ENCODE measurements at regions of chr13 and their contacts with region 1.

Region 1: GRCh38 chr13:94569615-94570014 is 26.3 kb downstream of the TGDS start:
- DNase-seq: no peak
- ATAC-seq: no peak
- H3K4me3 ChIP-seq: no peak overlapping the region
- H3K27ac ChIP-seq: no peak overlapping the region
- H3K4me1 ChIP-seq: no peaks in the 10 kb centered on the region
- H3K27me3 ChIP-seq: no peaks in the 10 kb centered on the region
- CTCF ChIP-seq: no peak

Region 2: GRCh38 chr13:94362411-94362909 is 207.2 kb before region 1 on chr13:
- CTCF ChIA-PET with region 1: no interaction called
- POLR2A ChIA-PET with region 1: no interaction called
- in situ Hi-C with region 1: no loop called
- intact Hi-C with region 1: no loop called
- DNase-seq: peak; percentile 53
- ATAC-seq: peak; percentile 93
- H3K4me3 ChIP-seq: no peak overlapping the region
- H3K27ac ChIP-seq: no peak overlapping the region
- H3K4me1 ChIP-seq: no peaks in the 10 kb centered on the region
- H3K27me3 ChIP-seq: no peaks in the 10 kb centered on the region
- CTCF ChIP-seq: peak; percentile 75

Region 3: GRCh38 chr13:94617389-94618000 is 47.9 kb after region 1 on chr13:
- CTCF ChIA-PET with region 1: no interaction called
- POLR2A ChIA-PET with region 1: interaction called, 11 read pairs
- in situ Hi-C with region 1: no loop called
- intact Hi-C with region 1: no loop called
- DNase-seq: no peak
- ATAC-seq: no peak
- H3K4me3 ChIP-seq: no peak overlapping the region
- H3K27ac ChIP-seq: no peak overlapping the region
- H3K4me1 ChIP-seq: no peaks in the 10 kb centered on the region
- H3K27me3 ChIP-seq: no peaks in the 10 kb centered on the region
- CTCF ChIP-seq: peak; percentile 48; the same call in 1 of the 2 replicates

Region 4: DNA sequence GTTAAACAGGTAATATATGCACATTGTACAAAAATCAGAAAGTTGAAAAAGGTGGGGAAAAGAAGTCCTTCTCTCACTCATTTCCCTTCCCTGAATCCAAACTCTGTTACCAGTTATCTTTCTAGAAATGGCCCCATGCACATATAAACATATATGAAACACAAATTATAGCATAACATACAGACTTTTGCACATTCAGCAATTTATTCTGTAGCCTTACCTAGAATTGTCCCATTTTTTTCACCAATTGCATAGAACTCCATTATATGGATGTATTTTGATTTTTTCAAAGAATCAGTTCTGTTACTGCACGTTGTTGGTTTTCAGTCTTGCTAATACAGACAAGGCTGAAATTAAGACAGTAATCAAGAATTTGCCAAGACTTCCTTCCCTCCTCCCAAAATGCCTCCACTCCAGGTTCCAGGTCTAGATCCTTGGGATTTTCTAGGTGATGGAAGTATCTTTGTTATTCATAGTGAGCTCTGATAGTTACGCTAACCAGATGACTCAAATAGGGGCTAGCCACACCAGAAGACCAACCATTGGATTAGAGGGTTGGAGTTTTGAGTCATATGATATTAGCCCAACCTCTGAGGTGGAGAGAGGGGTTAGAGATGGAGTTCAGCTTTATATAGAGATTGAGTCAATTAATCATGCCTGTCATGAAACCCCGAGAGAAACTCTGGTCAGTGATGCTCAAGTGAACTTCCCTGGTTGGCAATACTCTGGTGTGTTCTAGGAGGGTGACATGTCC is 62.8 kb after region 1 on chr13:
- CTCF ChIA-PET with region 1: no interaction called
- POLR2A ChIA-PET with region 1: no interaction called
- in situ Hi-C with region 1: no loop called
- intact Hi-C with region 1: no loop called
- DNase-seq: no peak
- ATAC-seq: no peak
- H3K4me3 ChIP-seq: no peak overlapping the region
- H3K27ac ChIP-seq: no peak overlapping the region
- H3K4me1 ChIP-seq: no peaks in the 10 kb centered on the region
- H3K27me3 ChIP-seq: no peaks in the 10 kb centered on the region
- CTCF ChIP-seq: no peak

Region 5: DNA sequence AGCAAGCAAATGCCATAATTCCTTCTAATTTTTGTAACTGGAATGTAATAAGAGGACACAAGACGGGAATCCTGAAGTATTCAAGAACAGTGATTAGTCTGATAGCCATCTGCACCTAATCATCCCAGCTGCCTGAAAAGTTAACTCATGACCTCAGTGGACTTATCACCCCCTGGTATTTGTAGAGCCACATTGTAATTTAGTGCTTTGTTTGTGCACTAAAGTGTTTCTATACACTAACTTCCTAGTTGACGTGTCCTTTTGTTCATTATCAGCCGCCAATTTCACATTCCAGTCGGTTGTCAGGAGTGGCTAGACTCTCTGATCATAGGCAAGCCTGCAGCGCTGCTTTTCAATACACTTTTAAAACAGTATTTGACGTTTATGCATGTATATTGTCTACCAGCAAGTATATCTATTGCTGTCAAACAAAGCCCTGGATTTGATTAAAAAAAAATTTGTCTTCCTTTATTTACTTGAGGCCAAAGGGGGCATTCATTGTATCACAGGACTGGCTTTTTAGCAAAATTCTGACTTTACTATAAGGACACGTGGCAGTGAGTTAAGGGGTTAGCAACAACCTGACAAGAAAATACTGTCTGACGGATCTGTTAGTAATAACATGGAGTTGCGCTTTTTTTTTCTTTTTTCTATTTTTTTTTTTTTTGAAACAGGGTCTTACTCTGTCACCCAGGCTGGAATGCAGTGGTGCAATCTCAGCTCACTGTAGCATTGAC is 153.2 kb after region 1 on chr13:
- CTCF ChIA-PET with region 1: no interaction called
- POLR2A ChIA-PET with region 1: no interaction called
- in situ Hi-C with region 1: no loop called
- intact Hi-C with region 1: no loop called
- DNase-seq: no peak
- ATAC-seq: no peak
- H3K4me3 ChIP-seq: no peak overlapping the region
- H3K27ac ChIP-seq: no peak overlapping the region
- H3K4me1 ChIP-seq: no peaks in the 10 kb centered on the region
- H3K27me3 ChIP-seq: no peaks in the 10 kb centered on the region
- CTCF ChIP-seq: no peak

Region 6: DNA sequence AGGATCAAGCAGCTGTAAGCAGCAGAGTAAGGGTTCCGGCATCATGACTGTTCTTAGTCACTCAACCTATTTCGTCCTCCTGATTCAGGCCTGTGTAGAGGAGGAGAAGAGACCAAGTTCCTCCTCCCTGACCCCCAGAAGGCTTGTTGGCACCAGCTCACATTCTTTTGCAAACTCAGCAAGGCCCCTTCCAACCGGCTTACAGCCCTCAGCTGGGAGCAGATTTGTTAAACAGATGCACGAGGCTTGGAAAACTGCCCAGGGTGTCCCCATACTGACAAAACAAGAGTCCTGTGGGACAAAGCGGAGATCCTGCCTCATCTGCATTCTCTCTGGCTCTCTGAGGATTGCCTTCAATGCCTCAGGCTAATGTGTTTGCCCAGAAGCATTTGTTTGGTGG is 255.9 kb after region 1 on chr13:
- CTCF ChIA-PET with region 1: no interaction called
- POLR2A ChIA-PET with region 1: no interaction called
- in situ Hi-C with region 1: no loop called
- intact Hi-C with region 1: no loop called
- DNase-seq: no peak
- ATAC-seq: no peak
- H3K4me3 ChIP-seq: no peak overlapping the region
- H3K27ac ChIP-seq: no peak overlapping the region
- H3K4me1 ChIP-seq: no peaks in the 10 kb centered on the region
- H3K27me3 ChIP-seq: no peaks in the 10 kb centered on the region
- CTCF ChIP-seq: no peak